H1 (cell line): ENCODE measurements at regions of chr4 and their contacts with region 1.

Region 1: DNA sequence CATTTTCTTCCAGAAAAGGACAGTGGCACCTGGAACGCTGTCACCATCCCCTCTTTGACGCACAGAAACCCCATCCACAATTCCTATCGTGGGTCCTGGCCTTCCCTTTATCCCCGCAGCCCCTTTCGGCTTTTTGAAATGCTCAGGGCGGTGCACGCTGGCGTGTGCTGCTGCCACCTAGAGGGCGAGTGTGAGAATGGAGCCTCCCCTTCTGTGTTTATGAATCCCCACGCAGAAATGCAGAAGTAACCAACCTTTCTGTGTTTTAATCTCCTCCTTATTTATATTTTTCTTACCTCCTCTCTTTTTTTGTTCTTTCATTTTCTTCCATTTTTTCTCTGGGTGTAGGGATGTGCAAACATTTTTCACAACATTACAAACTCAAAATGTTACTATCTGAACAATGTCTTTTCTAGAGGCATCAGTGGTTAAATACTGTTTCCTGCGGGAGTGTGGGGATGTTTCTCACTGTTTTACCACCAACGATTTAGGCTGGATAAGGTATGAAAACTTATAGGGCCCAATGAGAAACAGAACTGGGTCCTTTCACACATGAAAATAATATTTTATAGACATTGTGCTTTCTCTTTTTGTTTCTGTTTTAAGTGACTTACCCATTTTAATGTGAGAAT is 50.0 kb downstream of the TMA16 start:
- DNase-seq: peak in 1 of 2 experiments; percentile 78
- H3K4me3 ChIP-seq: no peak overlapping the region
- H3K27ac ChIP-seq: no peak overlapping the region
- H3K4me1 ChIP-seq: no peaks in the 10 kb centered on the region
- H3K27me3 ChIP-seq: no peaks in the 10 kb centered on the region
- CTCF ChIP-seq: peak; percentile 82 to 88 (median 84)
- EP300 ChIP-seq: no peak
- POLR2A ChIP-seq: no peak
- RAD21 ChIP-seq: peak; percentile 78 to 79

Region 2: DNA sequence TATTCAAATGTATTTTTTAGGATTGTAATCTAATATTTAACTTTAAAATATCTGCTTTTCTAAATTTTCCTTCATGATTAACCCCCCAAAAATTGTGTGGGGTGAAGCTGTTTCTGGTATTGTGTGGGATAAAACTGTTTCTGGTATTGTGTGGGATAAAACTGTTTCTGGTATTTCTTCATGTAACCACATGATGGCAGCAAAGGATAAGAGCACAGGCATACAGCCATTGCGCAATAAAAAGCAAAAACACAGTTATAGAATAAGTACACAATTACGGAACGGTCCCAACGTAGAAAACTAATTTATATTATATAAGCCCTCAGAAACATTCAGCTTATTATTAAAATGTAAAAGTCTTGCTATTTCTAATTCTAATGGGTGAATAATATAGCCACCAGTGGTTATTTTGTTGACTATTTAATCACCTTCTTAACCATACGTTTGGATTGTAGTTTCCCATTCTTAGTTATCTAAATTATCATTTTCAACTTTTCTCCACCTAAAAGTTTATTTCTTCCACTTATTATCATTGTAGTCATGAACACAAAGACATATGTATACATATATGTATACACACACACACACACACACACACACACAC is 1046.9 kb before region 1 on chr4:
- CTCF ChIA-PET with region 1: interaction called, 11 read pairs
- POLR2A ChIA-PET with region 1: no interaction called
- DNase-seq: no peak
- H3K4me3 ChIP-seq: no peak overlapping the region
- H3K27ac ChIP-seq: no peak overlapping the region
- H3K4me1 ChIP-seq: no peaks in the 10 kb centered on the region
- H3K27me3 ChIP-seq: no peaks in the 10 kb centered on the region
- CTCF ChIP-seq: peak in 2 of 3 experiments; percentile 53 to 61; a peak in 3 of 4 replicates
- EP300 ChIP-seq: no peak
- POLR2A ChIP-seq: no peak
- RAD21 ChIP-seq: peak; percentile 94 to 96

Region 3: GRCh38 chr4:163484906-163485305 is 59.6 kb before region 1 on chr4:
- CTCF ChIA-PET with region 1: interaction called, 26 read pairs
- POLR2A ChIA-PET with region 1: interaction called, 4 read pairs
- DNase-seq: peak; percentile 21 to 76
- H3K4me3 ChIP-seq: no peak overlapping the region
- H3K27ac ChIP-seq: no peak overlapping the region
- H3K4me1 ChIP-seq: peaks cover 0 to 4% (median 1%) of the 10 kb centered on the region in 4 experiments; a peak in 2 of 7 replicates
- H3K27me3 ChIP-seq: no peaks in the 10 kb centered on the region
- CTCF ChIP-seq: peak; percentile 31 to 55 (median 54); a peak in 3 of 4 replicates
- EP300 ChIP-seq: no peak
- POLR2A ChIP-seq: no peak
- RAD21 ChIP-seq: peak; percentile 77 to 80

Region 4: DNA sequence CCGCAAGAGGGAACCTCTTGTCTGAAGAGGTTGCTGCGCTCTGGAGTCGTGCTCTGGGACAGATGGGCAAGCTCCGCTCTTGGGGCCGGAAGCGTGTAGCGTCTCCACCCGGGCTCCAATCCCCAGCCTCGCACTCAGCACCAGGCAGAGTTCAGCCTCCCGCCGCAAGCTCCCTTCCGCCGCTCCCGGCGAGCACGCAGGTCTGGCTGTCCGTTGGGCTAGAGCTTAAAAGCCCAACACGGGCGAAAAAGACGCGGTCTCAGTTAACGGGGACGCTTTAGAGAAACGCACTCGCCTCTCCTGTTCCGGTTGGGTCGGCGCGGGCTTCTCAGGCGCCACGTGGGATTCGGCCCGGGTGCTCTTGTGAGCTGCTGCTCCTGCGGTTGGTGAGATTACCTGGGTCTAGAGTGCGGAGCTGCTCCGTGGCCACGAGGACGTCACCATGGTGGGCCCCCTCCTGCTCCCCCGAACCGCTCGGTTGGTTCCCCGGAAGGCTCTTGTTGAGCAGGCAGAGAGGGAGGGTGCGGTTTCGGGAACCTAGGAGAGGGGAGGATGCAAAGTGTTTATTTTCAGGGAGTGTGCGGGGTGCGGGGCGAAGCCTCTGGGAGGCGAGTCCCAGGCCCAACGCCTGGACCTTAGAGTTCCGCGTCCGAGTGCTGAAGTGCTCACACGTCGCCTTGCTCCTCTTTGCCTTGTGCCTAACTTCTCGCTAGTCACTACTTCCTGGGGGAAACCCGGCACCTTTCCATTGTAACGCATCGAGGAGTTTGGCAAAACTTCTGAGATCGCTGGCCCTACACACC is 50.0 kb before region 1 on chr4 and contains the start of gene TMA16:
- CTCF ChIA-PET with region 1: interaction called, 20 read pairs
- POLR2A ChIA-PET with region 1: interaction called, 13 read pairs
- DNase-seq: peak; percentile 77 to 87
- H3K4me3 ChIP-seq: peak within 1 kb of the TSS; percentile 86 to 97 (median 89)
- H3K27ac ChIP-seq: peak within 1 kb of the TSS; percentile 93
- H3K4me1 ChIP-seq: 0 out of 7 replicates have a peak, but pooled peaks cover 0 to 3% (median 0%) of the 10 kb centered on the region in 4 experiments
- H3K27me3 ChIP-seq: no peaks in the 10 kb centered on the region
- CTCF ChIP-seq: no peak
- EP300 ChIP-seq: no peak; a peak in 1 of 3 replicates
- POLR2A ChIP-seq: peak; percentile 83 to 99
- RAD21 ChIP-seq: 0 out of 4 replicates have a peak, but pooled peaks of 1 of the 2 experiments have one; percentile 9
- total RNA-seq, gene TMA16: 64.2 and 67.3 TPM in 2 replicates

Region 5: DNA sequence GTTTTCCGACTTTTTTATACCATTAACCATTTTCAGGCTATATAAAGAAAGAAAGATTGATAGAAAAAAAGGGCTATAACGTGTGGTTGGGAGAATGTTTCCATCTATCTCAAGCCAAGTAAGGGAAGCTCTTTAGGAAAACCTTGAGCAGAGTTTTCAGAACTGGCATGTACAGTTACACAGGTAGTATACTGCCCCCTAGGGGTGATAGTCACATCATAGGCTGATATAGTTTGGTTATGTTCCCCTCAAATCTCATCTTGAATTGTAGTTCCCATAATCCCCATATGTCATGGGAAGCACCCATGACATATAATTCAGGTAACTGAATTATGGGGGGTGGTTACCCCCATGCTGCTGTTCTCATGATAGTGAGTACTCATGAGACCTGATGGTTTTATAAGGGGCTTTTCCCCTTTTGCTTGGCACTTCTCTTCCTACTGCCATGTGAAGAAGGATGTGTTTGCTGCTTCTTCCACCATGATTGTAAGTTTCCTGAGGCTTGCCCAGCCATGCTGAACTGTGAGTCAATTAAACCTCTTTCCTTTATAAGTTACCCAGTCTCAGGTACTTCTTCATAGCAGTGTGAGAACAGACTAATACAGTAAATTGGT is 136.8 kb after region 1 on chr4:
- CTCF ChIA-PET with region 1: interaction called, 119 read pairs
- POLR2A ChIA-PET with region 1: no interaction called
- DNase-seq: no peak
- H3K4me3 ChIP-seq: no peak overlapping the region
- H3K27ac ChIP-seq: no peak overlapping the region
- H3K4me1 ChIP-seq: no peaks in the 10 kb centered on the region
- H3K27me3 ChIP-seq: no peaks in the 10 kb centered on the region
- CTCF ChIP-seq: peak in 2 of 3 experiments; percentile 56 to 68; a peak in 3 of 4 replicates
- EP300 ChIP-seq: no peak
- POLR2A ChIP-seq: no peak
- RAD21 ChIP-seq: peak; percentile 71 to 76

Region 6: GRCh38 chr4:163694385-163694784 is 149.9 kb after region 1 on chr4:
- CTCF ChIA-PET with region 1: interaction called, 13 read pairs
- POLR2A ChIA-PET with region 1: no interaction called
- DNase-seq: no peak
- H3K4me3 ChIP-seq: no peak overlapping the region
- H3K27ac ChIP-seq: no peak overlapping the region
- H3K4me1 ChIP-seq: no peaks in the 10 kb centered on the region
- H3K27me3 ChIP-seq: no peaks in the 10 kb centered on the region
- CTCF ChIP-seq: no peak
- EP300 ChIP-seq: no peak
- POLR2A ChIP-seq: no peak
- RAD21 ChIP-seq: no peak

Region 7: DNA sequence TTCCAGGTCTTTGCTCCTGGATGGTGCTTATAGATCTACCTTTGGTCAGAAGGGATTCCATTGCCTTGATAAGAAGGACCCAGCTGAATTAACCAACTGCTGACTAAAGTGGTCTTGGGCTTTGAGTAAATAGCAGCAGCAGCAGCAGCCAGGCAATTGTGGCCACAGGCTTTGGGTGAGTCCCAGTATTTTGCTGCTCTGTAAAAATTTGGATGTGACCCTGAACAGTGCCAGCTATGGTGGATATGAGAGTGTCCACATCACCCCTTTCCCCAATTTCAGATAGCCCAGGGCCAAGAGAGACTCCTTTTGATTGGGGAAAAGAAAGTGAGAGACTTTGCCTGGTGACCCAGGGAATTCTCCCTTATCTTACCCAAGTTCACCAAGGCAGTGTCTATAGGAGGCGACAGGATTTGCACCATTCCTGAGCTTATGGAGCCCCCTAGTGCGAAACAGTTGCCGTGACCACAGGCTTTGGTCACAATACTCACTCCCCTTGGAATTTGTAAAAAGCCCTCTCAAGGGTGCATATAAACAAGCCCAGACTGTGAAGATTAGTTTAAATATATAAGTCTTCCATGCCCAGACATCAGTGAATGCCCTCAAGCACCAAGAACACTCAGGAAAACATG is 468.0 kb after region 1 on chr4:
- CTCF ChIA-PET with region 1: interaction called, 85 read pairs
- POLR2A ChIA-PET with region 1: no interaction called
- DNase-seq: peak; percentile 23 to 56
- H3K4me3 ChIP-seq: no peak overlapping the region
- H3K27ac ChIP-seq: no peak overlapping the region
- H3K4me1 ChIP-seq: no peaks in the 10 kb centered on the region
- H3K27me3 ChIP-seq: no peaks in the 10 kb centered on the region
- CTCF ChIP-seq: peak; percentile 69 to 92 (median 87)
- EP300 ChIP-seq: peak in 1 of 2 experiments; percentile 44; a peak in 1 of 3 replicates
- POLR2A ChIP-seq: no peak
- RAD21 ChIP-seq: peak; percentile 98 to 99